ENCODE measurements at regions of chr4 and their contacts with region 1.

Region 1: GRCh38 chr4:111641955-111642579 is 503.2 kb upstream of the FAM241A start:
- DNase-seq: peak; percentile 92
- H3K4me3 ChIP-seq: no peak overlapping the region
- H3K27ac ChIP-seq: no peak overlapping the region
- H3K4me1 ChIP-seq: peaks cover 13% of the 10 kb centered on the region
- H3K27me3 ChIP-seq: no peaks in the 10 kb centered on the region
- CTCF ChIP-seq: peak; percentile 98

Region 2: DNA sequence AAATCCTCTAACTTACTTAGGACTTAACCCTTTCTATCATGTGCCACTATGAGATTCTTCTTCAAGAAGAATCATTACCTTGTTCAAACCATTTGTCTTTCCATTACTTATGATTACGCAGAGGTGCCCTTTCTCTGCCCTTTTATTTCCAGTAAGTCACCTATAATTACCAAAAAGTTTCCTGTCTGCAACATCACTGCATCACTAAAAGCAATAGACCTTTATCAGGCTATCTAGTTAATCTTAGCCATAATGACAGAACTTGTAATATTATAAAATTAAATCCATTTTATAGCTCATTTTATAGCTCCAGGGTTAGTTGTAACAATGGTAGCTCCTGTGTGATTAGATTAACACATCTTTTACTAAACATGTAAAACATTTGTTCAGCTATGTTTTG is 345.6 kb before region 1 on chr4:
- CTCF ChIA-PET with region 1: no interaction called
- POLR2A ChIA-PET with region 1: no interaction called
- intact Hi-C with region 1: no loop called
- DNase-seq: no peak
- H3K4me3 ChIP-seq: no peak overlapping the region
- H3K27ac ChIP-seq: no peak overlapping the region
- H3K4me1 ChIP-seq: no peaks in the 10 kb centered on the region
- H3K27me3 ChIP-seq: no peaks in the 10 kb centered on the region
- CTCF ChIP-seq: no peak

Region 3: GRCh38 chr4:111778543-111778942 is 136.5 kb after region 1 on chr4:
- CTCF ChIA-PET with region 1: no interaction called
- POLR2A ChIA-PET with region 1: no interaction called
- intact Hi-C with region 1: loop called (anchors 2 kb)
- DNase-seq: peak; percentile 43
- H3K4me3 ChIP-seq: no peak overlapping the region
- H3K27ac ChIP-seq: no peak overlapping the region
- H3K4me1 ChIP-seq: peaks cover 5% of the 10 kb centered on the region
- H3K27me3 ChIP-seq: no peaks in the 10 kb centered on the region
- CTCF ChIP-seq: peak; percentile 53

Region 4: GRCh38 chr4:111798840-111799239 is 156.8 kb after region 1 on chr4:
- CTCF ChIA-PET with region 1: no interaction called
- POLR2A ChIA-PET with region 1: no interaction called
- intact Hi-C with region 1: loop called (anchors 2 kb)
- DNase-seq: peak; percentile 35
- H3K4me3 ChIP-seq: no peak overlapping the region
- H3K27ac ChIP-seq: no peak overlapping the region
- H3K4me1 ChIP-seq: peaks cover 45% of the 10 kb centered on the region
- H3K27me3 ChIP-seq: no peaks in the 10 kb centered on the region
- CTCF ChIP-seq: peak; percentile 60

Region 5: DNA sequence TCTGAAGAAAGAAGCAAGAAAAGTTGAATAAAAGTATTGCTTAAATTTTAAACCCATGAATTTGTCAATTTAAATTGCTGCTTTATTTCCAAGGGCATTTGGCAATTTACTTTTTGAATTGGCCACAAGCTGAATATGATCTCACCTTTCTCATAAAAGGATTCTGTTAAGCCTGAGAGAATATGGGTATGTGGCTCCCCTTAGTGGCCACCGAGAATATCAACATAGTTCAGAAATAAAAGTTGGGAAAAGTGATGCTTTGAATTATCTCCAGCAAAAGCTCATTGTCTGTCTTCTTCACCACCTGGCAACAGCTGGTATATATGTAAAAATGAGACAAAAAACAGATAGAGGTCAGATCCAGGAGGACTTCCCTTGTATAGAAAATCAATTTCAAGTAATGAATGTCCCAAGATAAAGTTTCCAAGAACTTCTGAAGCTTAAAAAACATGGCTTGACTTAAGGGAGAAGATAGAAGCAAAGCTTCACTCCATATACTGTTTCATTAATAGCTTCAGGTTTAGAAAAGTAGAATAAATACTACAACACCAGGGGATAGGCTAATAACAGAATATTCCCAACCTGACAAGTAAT is 212.5 kb after region 1 on chr4:
- CTCF ChIA-PET with region 1: interaction called, 10 read pairs
- POLR2A ChIA-PET with region 1: no interaction called
- intact Hi-C with region 1: loop called (anchors 1 kb)
- DNase-seq: peak; percentile 48
- H3K4me3 ChIP-seq: no peak overlapping the region
- H3K27ac ChIP-seq: no peak overlapping the region
- H3K4me1 ChIP-seq: no peaks in the 10 kb centered on the region
- H3K27me3 ChIP-seq: no peaks in the 10 kb centered on the region
- CTCF ChIP-seq: peak; percentile 76

Region 6: DNA sequence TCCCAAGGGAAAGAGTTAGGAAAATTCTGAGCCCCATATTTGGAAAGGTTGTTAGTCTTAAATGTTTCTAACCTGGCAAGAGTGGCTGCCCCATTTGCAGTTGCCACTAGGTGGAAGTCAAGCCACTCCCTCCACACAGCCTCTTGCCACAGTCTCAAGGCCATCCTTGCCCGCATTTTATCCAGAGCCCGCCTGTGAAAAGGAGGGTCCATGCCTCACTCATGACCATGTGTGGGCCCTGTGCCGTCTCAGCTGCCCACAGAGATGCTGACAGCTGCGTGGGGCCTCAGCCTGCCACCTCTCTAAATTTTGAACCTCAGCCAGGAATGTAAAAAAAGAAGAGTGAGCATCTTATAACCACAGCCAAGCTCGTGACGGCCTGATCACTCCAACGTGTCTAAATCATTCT is 301.7 kb after region 1 on chr4:
- CTCF ChIA-PET with region 1: no interaction called
- POLR2A ChIA-PET with region 1: no interaction called
- intact Hi-C with region 1: loop called (anchors 2 kb)
- DNase-seq: peak; percentile 53
- H3K4me3 ChIP-seq: no peak overlapping the region
- H3K27ac ChIP-seq: no peak overlapping the region
- H3K4me1 ChIP-seq: no peaks in the 10 kb centered on the region
- H3K27me3 ChIP-seq: no peaks in the 10 kb centered on the region
- CTCF ChIP-seq: peak; percentile 54

Region 7: GRCh38 chr4:112031712-112032328 is 389.8 kb after region 1 on chr4:
- CTCF ChIA-PET with region 1: no interaction called
- POLR2A ChIA-PET with region 1: no interaction called
- intact Hi-C with region 1: loop called (anchors 2 kb)
- DNase-seq: peak; percentile 76
- H3K4me3 ChIP-seq: no peak overlapping the region
- H3K27ac ChIP-seq: no peak overlapping the region
- H3K4me1 ChIP-seq: peaks cover 17% of the 10 kb centered on the region
- H3K27me3 ChIP-seq: no peaks in the 10 kb centered on the region
- CTCF ChIP-seq: peak; percentile 78